ENCODE measurements at regions of chr2 and their contacts with region 1.

Region 1: DNA sequence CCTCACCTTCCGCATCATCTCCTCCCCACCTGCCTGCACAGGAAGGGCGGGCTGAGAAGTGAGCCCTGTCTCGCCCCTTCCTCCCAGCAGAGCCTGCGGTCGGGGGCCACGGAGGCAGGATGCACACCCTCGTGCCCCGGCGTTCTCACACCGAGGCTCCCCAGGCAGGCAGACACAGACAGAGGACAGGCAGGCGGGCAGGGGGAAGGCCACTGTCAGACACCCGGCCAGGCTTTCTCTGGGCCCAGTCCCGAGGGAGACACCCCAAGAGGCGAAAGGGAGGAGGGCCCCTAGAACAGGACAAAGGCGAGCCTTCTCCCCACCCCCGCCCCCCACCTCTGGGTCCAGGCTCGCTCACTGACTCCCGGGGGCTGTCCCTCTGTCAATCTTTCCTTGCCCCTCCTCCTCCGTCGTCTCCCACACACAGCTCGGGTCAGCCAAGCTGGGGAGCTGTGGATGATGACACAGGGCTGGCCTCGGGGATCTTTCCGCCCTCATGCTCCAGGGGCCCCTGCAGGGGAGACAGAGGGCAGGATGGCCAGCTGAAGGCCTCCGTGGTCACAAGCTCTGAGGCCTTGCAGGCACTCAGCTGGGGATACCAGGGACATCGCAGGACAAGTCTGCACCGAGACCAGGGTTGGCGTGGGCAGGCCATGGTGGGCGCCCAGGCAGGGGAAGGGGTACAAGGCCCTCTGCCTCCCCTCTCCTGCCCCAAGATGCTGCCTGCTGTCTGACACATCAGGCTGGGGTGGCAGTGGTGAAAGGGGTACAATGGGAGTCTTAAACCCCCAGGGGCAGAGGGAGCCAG is 24.9 kb downstream of the BIN1 start:
- DNase-seq: peak; percentile 69 to 92 (median 81)
- ATAC-seq: peak; percentile 73
- H3K4me3 ChIP-seq: peak overlapping the region; percentile 85
- H3K4me3 Mint-ChIP-seq: peak overlapping the region; percentile 95
- H3K27ac ChIP-seq: peak overlapping the region; percentile 83 to 93
- H3K27ac Mint-ChIP-seq: peak overlapping the region; percentile 99
- H3K4me1 ChIP-seq: peaks cover 94% of the 10 kb centered on the region
- H3K4me1 Mint-ChIP-seq: peaks cover 86% of the 10 kb centered on the region
- H3K27me3 ChIP-seq: no peaks in the 10 kb centered on the region
- H3K27me3 Mint-ChIP-seq: no peaks in the 10 kb centered on the region
- CTCF ChIP-seq: no peak

Region 2: GRCh38 chr2:126657636-126658318 is 424.3 kb before region 1 on chr2:
- CTCF ChIA-PET with region 1: no interaction called
- POLR2A ChIA-PET with region 1: interaction called, 5 read pairs
- intact Hi-C with region 1: loop called (anchors 5 to 10 kb)
- DNase-seq: peak; percentile 50 to 90 (median 74)
- ATAC-seq: peak; percentile 59
- H3K4me3 ChIP-seq: peak overlapping the region; percentile 86
- H3K4me3 Mint-ChIP-seq: peak overlapping the region; percentile 100
- H3K27ac ChIP-seq: peak overlapping the region; percentile 80 to 81
- H3K27ac Mint-ChIP-seq: peak overlapping the region; percentile 98
- H3K4me1 ChIP-seq: peaks cover 66% of the 10 kb centered on the region
- H3K4me1 Mint-ChIP-seq: peaks cover 78% of the 10 kb centered on the region
- H3K27me3 ChIP-seq: no peaks in the 10 kb centered on the region
- H3K27me3 Mint-ChIP-seq: no peaks in the 10 kb centered on the region
- CTCF ChIP-seq: no peak

Region 3: DNA sequence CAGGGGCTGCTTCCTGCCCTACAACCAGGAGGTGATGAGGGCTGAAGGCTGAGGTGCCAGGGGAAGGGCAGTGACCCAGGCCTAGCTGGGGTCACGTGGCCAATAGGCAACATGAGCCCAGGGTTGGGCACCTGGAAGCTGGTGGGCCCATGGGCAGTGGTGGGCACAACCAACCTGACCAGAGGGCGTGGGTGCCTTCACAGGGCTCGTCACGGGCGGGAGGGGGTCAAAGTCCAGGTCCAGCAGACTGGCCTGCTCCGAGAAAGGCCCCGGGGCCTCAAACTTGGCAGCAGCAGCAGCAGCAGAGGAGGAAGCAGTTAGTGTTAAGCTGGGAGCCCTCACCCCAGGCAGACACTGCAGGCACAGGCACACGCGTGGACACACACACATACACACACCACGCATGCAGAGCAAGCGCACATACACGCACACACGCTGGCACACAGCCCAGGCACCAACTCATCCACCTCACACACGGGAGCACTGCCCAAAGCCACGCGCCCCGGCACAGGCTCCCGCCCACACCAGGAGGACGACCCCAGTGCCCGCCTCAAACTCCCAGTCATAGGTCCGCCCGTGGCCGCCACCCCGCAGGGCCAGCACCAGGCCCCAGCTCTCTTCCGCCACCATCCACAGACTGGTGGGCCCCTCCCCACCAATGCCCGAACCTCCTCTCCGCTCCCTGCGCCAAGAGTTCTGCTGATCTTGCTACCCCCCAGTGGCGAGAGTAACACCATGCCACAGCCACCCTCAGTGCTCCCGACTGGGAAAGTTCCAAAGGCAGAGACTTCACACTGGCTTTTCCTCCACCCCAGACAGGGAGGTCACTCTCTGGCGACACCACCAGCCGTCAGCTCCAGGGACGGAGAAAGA is 28.1 kb before region 1 on chr2:
- CTCF ChIA-PET with region 1: no interaction called
- POLR2A ChIA-PET with region 1: no interaction called
- intact Hi-C with region 1: no loop called
- DNase-seq: no peak
- ATAC-seq: no peak
- H3K4me3 ChIP-seq: no peak overlapping the region
- H3K4me3 Mint-ChIP-seq: no peak overlapping the region
- H3K27ac ChIP-seq: no peak overlapping the region
- H3K27ac Mint-ChIP-seq: peak overlapping the region; percentile 62
- H3K4me1 ChIP-seq: peaks cover 14% of the 10 kb centered on the region
- H3K4me1 Mint-ChIP-seq: no peaks in the 10 kb centered on the region
- H3K27me3 ChIP-seq: no peaks in the 10 kb centered on the region
- H3K27me3 Mint-ChIP-seq: no peaks in the 10 kb centered on the region
- CTCF ChIP-seq: no peak

Region 4: DNA sequence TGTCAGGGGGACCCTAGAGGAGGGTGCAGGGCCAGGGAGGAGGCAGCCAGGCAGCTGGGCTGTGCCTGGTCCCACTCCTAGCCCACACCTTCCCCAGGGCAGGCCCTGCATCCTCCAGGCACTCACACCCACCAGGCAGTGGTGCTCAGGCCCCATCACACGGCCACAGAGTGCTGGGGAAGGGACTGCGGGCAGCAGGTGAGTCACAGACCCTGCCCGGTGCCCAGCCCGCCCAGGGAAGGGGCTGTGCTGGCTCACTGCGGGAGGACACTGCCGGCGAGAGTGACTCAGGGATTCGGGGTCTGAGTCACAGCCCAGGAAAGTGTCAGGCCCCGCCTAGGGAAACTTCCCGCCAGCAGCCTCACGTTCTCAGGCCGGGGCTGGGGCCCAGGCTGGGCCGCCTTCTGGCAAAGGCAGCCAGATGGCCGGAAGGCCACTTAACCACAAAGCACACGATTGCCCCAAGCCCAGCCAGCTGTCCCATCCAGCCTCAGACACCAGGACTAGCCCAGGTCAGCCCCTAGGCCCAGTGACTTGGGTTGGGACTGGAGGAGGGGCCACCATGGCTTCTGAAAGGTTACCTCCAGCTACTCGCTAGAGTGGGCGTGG is 17.3 kb before region 1 on chr2:
- CTCF ChIA-PET with region 1: interaction called, 9 read pairs
- POLR2A ChIA-PET with region 1: interaction called, 20 read pairs
- intact Hi-C with region 1: no loop called
- DNase-seq: peak in 10 of 14 experiments; percentile 18 to 84 (median 42)
- ATAC-seq: peak; percentile 50
- H3K4me3 ChIP-seq: no peak overlapping the region
- H3K4me3 Mint-ChIP-seq: no peak overlapping the region
- H3K27ac ChIP-seq: peak overlapping the region; percentile 31 to 58
- H3K27ac Mint-ChIP-seq: peak overlapping the region; percentile 24
- H3K4me1 ChIP-seq: peaks cover 46% of the 10 kb centered on the region
- H3K4me1 Mint-ChIP-seq: peaks cover 15% of the 10 kb centered on the region
- H3K27me3 ChIP-seq: no peaks in the 10 kb centered on the region
- H3K27me3 Mint-ChIP-seq: no peaks in the 10 kb centered on the region
- CTCF ChIP-seq: no peak

Region 5: DNA sequence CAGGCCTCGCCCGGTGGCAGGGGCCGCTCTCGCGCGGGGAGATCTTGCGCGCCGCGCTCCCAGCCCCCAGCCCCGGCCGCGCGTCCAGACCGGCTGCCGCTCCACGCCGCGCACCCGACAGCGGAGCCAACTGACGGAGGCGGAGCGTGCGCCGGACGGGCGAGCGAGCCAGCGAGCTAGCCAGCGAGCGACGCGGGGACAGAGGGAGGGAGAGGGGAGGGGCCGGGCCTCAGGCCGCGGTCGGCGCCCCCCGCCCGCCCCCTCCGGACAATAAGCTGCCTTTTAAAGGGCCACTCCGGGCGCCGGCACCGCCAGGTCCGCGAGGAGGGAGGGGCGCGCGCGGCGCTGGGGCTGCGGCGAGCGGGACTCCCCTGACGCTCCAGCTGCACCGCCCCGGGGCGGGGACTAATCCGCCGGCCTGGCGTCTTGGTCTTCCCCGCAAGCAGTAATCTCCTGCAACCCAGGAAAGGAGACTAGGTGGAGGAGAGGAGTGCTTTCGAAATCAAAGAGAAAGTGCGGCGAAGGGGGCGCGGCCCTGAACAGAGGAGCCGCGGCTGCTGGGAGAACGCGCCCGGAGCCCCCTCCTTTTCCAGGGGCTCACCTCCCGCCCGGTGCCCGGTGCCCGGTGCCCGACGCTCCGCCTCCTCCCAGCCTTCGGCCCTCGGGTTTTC is 25.1 kb after region 1 on chr2 and contains the start of gene BIN1:
- CTCF ChIA-PET with region 1: no interaction called
- POLR2A ChIA-PET with region 1: interaction called, 20 read pairs
- intact Hi-C with region 1: loop called (anchors 1 to 2 kb)
- DNase-seq: peak; percentile 22 to 88 (median 56)
- ATAC-seq: peak; percentile 80
- H3K4me3 ChIP-seq: peak within 1 kb of the TSS; percentile 84
- H3K4me3 Mint-ChIP-seq: peak within 1 kb of the TSS; percentile 96
- H3K27ac ChIP-seq: no peak within 1 kb of the TSS
- H3K27ac Mint-ChIP-seq: peak within 1 kb of the TSS; percentile 66
- H3K4me1 ChIP-seq: peaks cover 25% of the 10 kb centered on the region
- H3K4me1 Mint-ChIP-seq: peaks cover 11% of the 10 kb centered on the region
- H3K27me3 ChIP-seq: peaks cover 10 to 23% of the 10 kb centered on the region in 2 experiments
- H3K27me3 Mint-ChIP-seq: peaks cover 27% of the 10 kb centered on the region
- CTCF ChIP-seq: no peak
- total RNA-seq, gene BIN1: 98.8 to 104 TPM

Region 6: GRCh38 chr2:127293748-127294562 is 211.9 kb after region 1 on chr2 and contains the start of gene ERCC3:
- CTCF ChIA-PET with region 1: no interaction called
- POLR2A ChIA-PET with region 1: interaction called, 8 read pairs
- intact Hi-C with region 1: loop called in 1 of 2 experiments (anchors 5 kb)
- DNase-seq: peak; percentile 56 to 88 (median 74)
- ATAC-seq: peak; percentile 86
- H3K4me3 ChIP-seq: peak within 1 kb of the TSS; percentile 93
- H3K4me3 Mint-ChIP-seq: peak within 1 kb of the TSS; percentile 93
- H3K27ac ChIP-seq: peak within 1 kb of the TSS; percentile 60 to 69
- H3K27ac Mint-ChIP-seq: peak within 1 kb of the TSS; percentile 79
- H3K4me1 ChIP-seq: peaks cover 20% of the 10 kb centered on the region
- H3K4me1 Mint-ChIP-seq: peaks cover 36% of the 10 kb centered on the region
- H3K27me3 ChIP-seq: no peaks in the 10 kb centered on the region
- H3K27me3 Mint-ChIP-seq: no peaks in the 10 kb centered on the region
- CTCF ChIP-seq: no peak
- total RNA-seq, gene ERCC3: 40.0 to 44.0 TPM

Region 7: GRCh38 chr2:127551221-127551930 is 469.3 kb after region 1 on chr2:
- CTCF ChIA-PET with region 1: no interaction called
- POLR2A ChIA-PET with region 1: no interaction called
- intact Hi-C with region 1: no loop called
- DNase-seq: no peak
- ATAC-seq: no peak
- H3K4me3 ChIP-seq: no peak overlapping the region
- H3K4me3 Mint-ChIP-seq: no peak overlapping the region
- H3K27ac ChIP-seq: no peak overlapping the region
- H3K27ac Mint-ChIP-seq: no peak overlapping the region
- H3K4me1 ChIP-seq: no peaks in the 10 kb centered on the region
- H3K4me1 Mint-ChIP-seq: no peaks in the 10 kb centered on the region
- H3K27me3 ChIP-seq: no peaks in the 10 kb centered on the region
- H3K27me3 Mint-ChIP-seq: peaks cover 19% of the 10 kb centered on the region
- CTCF ChIP-seq: no peak

Measured in CD4-positive, alpha-beta T cell (primary cell).